Prostate gland (tissue), 2 donors: ENCODE measurements at regions of chr14 and their contacts with region 1.

Region 1: GRCh38 chr14:24710403-24711112 is 76.6 kb upstream of the GZMB start:
- DNase-seq: peak; percentile 40
- H3K4me3 ChIP-seq: no peak overlapping the region
- H3K27ac ChIP-seq: no peak overlapping the region
- H3K4me1 ChIP-seq: no peaks in the 10 kb centered on the region
- H3K27me3 ChIP-seq: no peaks in the 10 kb centered on the region
- CTCF ChIP-seq: peak in 3 of 4 experiments; percentile 50 to 59 (median 54)
- POLR2A ChIP-seq: no peak

Region 2: DNA sequence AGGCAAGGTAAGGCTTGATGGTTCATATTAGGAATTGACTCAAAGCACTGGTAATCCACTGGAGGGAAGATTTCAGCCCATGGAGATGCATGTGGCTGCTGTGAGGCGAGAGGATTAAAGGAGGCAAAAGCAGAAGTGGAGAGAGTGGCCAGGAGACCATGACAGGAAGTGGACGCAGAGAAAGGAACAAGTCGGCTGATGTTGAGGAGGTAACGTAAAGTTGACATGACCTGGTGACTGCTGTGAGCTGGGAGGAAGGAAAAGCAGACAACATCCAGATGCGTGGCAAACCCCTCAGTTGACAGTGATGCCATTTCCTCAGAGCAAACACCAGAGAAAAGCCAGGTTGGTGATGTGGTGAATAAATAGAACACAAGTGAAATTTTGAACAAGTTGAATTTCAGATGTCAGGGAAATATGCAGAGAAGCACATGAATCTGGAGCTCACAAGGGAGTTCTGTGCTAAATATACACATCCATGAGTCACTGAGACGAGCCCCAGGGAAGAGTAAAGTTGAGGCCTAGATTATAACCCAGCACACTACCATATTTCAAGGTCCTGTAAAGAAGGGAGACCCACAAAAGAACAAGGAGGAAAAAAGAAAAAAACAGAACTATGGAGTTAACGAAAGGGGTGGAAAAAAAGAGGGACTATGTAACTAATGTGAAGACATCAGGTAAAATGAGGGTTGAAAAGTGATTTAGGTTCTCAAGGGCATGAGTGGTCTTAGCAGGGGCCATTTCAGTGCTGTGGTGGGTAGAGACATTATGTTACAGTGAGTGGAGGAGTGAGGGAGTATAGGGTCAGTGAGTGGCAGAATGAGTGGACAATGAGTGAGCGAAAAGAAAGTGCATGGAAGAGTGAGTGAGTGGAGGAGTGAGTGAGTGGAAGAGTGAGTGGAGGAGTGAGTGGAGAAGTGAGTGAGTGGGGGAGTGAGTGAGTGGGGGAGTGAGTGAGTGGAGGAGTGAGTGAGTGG is 15.0 kb before region 1 on chr14:
- intact Hi-C with region 1: no loop called
- DNase-seq: no peak
- H3K4me3 ChIP-seq: no peak overlapping the region
- H3K27ac ChIP-seq: no peak overlapping the region
- H3K4me1 ChIP-seq: no peaks in the 10 kb centered on the region
- H3K27me3 ChIP-seq: no peaks in the 10 kb centered on the region
- CTCF ChIP-seq: no peak
- POLR2A ChIP-seq: no peak

Region 3: GRCh38 chr14:24784981-24785380 is 74.4 kb after region 1 on chr14:
- intact Hi-C with region 1: no loop called
- DNase-seq: no peak
- H3K4me3 ChIP-seq: no peak overlapping the region
- H3K27ac ChIP-seq: no peak overlapping the region
- H3K4me1 ChIP-seq: no peaks in the 10 kb centered on the region
- H3K27me3 ChIP-seq: no peaks in the 10 kb centered on the region
- CTCF ChIP-seq: no peak
- POLR2A ChIP-seq: no peak

Region 4: GRCh38 chr14:25150934-25151790 is 440.6 kb after region 1 on chr14:
- intact Hi-C with region 1: loop called (anchors 1 kb)
- DNase-seq: no peak
- H3K4me3 ChIP-seq: no peak overlapping the region
- H3K27ac ChIP-seq: no peak overlapping the region
- H3K4me1 ChIP-seq: no peaks in the 10 kb centered on the region
- H3K27me3 ChIP-seq: no peaks in the 10 kb centered on the region
- CTCF ChIP-seq: peak; percentile 61 to 88 (median 82)
- POLR2A ChIP-seq: no peak

Region 5: DNA sequence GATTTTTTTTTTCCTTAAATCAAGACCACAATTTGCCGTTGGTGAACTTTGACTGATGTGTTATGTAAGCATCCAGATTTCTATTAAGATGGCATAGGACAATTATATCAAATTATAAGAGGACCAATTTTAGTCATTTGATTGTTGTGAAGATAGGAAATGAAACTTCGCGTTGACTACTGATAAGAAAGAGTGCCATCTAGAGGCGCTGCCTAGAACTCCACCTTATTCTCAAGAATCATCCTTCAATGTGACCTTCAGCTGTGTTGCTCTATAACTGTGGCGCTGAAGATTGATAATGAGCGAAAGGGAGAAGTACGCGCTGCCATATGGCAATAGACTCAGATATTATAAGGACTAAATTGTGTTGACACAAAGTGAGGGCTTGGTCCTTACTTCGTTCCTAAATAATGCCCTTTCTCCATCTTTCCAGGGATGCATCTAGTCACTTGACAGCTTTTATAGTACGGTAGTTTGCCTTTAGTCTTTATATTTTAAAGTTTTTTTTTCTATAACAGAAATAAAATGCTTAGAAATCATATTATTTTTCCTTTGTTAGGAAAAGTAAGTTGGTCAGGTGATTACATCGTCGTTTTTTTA is 690.1 kb after region 1 on chr14:
- intact Hi-C with region 1: loop called (anchors 5 kb)
- DNase-seq: peak; percentile 55
- H3K4me3 ChIP-seq: no peak overlapping the region
- H3K27ac ChIP-seq: no peak overlapping the region
- H3K4me1 ChIP-seq: no peaks in the 10 kb centered on the region
- H3K27me3 ChIP-seq: no peaks in the 10 kb centered on the region
- CTCF ChIP-seq: peak in 3 of 4 experiments; percentile 56 to 67 (median 64)
- POLR2A ChIP-seq: no peak